Natural killer cell (primary cell): ENCODE measurements at regions of chr14 and their contacts with region 1.

Region 1: GRCh38 chr14:66070509-66071319 is 415.5 kb upstream of the CCDC196 start:
- DNase-seq: peak; percentile 55 to 81
- ATAC-seq: peak; percentile 61 to 91 (median 74)
- H3K4me3 ChIP-seq: no peak overlapping the region
- H3K4me3 Mint-ChIP-seq: no peak overlapping the region
- H3K27ac ChIP-seq: no peak overlapping the region
- H3K27ac Mint-ChIP-seq: no peak overlapping the region
- H3K4me1 ChIP-seq: no peaks in the 10 kb centered on the region
- H3K4me1 Mint-ChIP-seq: no peaks in the 10 kb centered on the region
- H3K27me3 ChIP-seq: peaks cover 4% of the 10 kb centered on the region
- H3K27me3 Mint-ChIP-seq: peaks cover 6 to 18% of the 10 kb centered on the region in 2 donors
- CTCF ChIP-seq: peak; percentile 93

Region 2: GRCh38 chr14:65164068-65164824 is 906.5 kb before region 1 on chr14:
- intact Hi-C with region 1: loop called (anchors 1 kb)
- DNase-seq: peak in 1 of 2 donors; percentile 79
- ATAC-seq: peak in 2 of 3 donors; percentile 35 to 42
- H3K4me3 ChIP-seq: no peak overlapping the region
- H3K4me3 Mint-ChIP-seq: no peak overlapping the region
- H3K27ac ChIP-seq: no peak overlapping the region
- H3K27ac Mint-ChIP-seq: no peak overlapping the region
- H3K4me1 ChIP-seq: peaks cover 4% of the 10 kb centered on the region
- H3K4me1 Mint-ChIP-seq: no peaks in the 10 kb centered on the region
- H3K27me3 ChIP-seq: no peaks in the 10 kb centered on the region
- H3K27me3 Mint-ChIP-seq: peaks cover 0 to 6% of the 10 kb centered on the region in 2 donors
- CTCF ChIP-seq: peak; percentile 59

Region 3: DNA sequence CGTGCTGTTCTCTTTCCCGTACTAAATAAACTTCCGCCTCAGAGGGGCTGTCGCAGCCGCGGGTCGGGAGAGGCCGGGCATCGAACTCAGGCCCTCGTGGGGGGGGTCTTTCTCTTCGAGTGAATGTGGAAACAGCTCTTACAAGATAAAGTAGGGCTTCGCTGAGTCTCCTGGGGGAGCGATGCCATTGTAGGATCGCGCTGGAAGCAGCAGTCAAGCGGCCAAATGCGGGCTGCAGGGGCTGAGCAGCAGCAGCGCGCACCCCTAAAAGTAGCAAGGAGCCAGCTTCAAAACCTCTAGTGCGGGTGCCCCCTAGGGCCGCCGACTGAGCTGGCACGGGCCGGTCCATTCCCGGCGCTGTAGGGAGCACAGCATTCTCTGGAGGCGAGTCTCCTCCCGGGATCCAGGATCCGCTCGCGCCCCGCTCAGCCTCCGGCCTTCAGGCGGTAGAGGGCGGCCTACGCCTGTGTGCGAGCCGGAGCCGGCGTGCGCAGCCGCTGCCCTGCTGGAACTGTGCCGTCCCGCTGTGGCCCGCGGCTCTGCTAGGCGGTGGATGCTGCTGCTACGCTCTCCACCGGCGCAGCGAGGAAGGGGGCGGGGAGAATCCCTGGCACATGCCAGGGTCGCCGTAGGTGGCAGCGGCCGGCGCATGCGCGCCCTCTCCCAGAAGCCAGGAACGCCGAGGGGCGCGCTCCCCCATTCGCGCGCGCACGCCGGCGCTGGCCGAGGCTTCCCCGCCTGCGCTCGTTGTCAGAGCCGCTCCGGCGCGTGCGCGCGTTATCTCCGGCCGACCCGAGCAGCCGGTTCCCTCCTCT is 658.5 kb before region 1 on chr14 and contains the start of gene FUT8:
- intact Hi-C with region 1: loop called (anchors 2 kb)
- DNase-seq: peak; percentile 82 to 97
- ATAC-seq: peak; percentile 78 to 94 (median 83)
- H3K4me3 ChIP-seq: peak within 1 kb of the TSS; percentile 81
- H3K4me3 Mint-ChIP-seq: peak within 1 kb of the TSS; percentile 98
- H3K27ac ChIP-seq: peak within 1 kb of the TSS; percentile 68
- H3K27ac Mint-ChIP-seq: peak within 1 kb of the TSS; percentile 89 to 93
- H3K4me1 ChIP-seq: peaks cover 10% of the 10 kb centered on the region
- H3K4me1 Mint-ChIP-seq: peaks cover 14 to 22% of the 10 kb centered on the region in 2 donors
- H3K27me3 ChIP-seq: no peaks in the 10 kb centered on the region
- H3K27me3 Mint-ChIP-seq: peaks cover 0 to 2% of the 10 kb centered on the region in 2 donors
- CTCF ChIP-seq: peak; percentile 24
- total RNA-seq, gene FUT8: 20.7 to 29.2 (median 21.2) TPM